BJ (cell line): ENCODE measurements at regions of chr6 and their contacts with region 1.

Region 1: DNA sequence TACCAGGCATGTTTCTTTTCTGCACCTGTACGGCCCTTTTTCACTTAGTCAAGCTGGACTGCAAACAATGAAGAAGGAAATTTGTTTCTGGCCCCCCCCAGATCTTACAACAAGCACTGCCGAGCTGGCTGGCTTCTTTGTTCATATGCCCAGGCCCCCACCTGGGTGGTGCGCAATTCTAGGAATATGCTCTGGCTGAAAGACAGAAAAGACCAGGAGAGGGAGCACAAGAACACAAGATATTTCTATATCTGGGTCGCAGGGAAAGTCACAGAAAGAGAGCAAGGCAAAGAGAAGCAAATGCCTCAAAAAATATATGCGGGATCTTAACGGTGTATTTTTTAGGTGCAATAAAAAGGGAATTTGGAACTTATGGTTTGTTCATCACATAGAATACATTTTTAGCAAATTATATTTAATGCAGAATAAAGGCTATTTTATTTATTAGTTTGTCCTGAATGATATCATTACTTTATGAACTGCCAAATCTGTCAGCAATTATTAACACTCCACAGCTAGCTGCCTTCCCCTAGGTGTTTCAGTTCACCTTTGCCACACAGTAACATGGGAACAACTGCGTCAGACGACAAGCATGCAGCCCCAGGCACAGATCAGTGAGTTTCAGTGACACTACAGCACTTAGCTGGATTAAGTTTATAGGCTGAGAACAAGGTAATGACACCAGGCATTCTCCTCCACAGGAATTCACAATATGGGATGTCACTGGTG is 76.5 kb downstream of the GJA10 start:
- DNase-seq: no peak
- H3K4me3 ChIP-seq: no peak overlapping the region
- H3K27me3 ChIP-seq: 0 out of 2 replicates have a peak, but pooled peaks cover 1% of the 10 kb centered on the region
- CTCF ChIP-seq: peak; percentile 71

Region 2: GRCh38 chr6:89412071-89413005 is 558.4 kb before region 1 on chr6 and contains the start of gene RRAGD:
- CTCF ChIA-PET with region 1: no interaction called
- POLR2A ChIA-PET with region 1: no interaction called
- DNase-seq: no peak
- H3K4me3 ChIP-seq: peak within 1 kb of the TSS; percentile 32
- H3K27me3 ChIP-seq: peaks cover 26% of the 10 kb centered on the region
- CTCF ChIP-seq: no peak
- polyA plus RNA-seq, gene RRAGD: not detected in 2 replicates

Region 3: DNA sequence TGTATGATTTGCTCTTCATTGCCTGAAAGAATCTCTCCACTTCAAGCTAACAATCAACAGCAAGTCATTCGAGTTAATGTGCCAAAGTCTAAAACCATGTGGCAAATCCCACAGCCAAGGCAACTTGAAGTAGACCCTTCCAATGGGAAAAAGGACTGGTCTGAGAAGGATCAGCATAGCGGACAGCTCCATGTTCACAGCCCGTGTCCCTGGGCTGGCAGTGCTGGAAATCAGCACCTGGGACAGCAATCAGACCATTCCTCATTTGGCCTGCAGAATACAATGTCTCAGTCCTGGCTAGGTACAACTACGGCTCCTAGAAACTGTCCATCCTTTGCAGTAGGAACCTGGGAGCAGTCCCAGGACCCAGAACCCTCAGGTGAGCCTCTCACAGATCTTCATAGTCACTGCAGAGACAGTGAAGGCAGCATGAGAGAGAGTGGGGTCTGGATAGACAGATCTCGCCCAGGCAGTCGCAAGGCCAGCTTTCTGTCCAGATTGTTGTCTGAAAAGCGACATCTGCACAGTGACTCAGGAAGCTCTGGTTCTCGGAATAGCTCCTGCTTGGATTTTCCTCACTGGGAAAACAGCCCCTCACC is 75.4 kb before region 1 on chr6:
- CTCF ChIA-PET with region 1: no interaction called
- POLR2A ChIA-PET with region 1: no interaction called
- DNase-seq: no peak
- H3K4me3 ChIP-seq: no peak overlapping the region
- H3K27me3 ChIP-seq: no peaks in the 10 kb centered on the region; the same call in 1 of the 2 replicates
- CTCF ChIP-seq: no peak

Region 4: GRCh38 chr6:89940225-89941027 is 30.3 kb before region 1 on chr6:
- CTCF ChIA-PET with region 1: interaction called, 17 read pairs
- POLR2A ChIA-PET with region 1: no interaction called
- DNase-seq: no peak
- H3K4me3 ChIP-seq: no peak overlapping the region
- H3K27me3 ChIP-seq: peaks cover 2% of the 10 kb centered on the region; the same call in 1 of the 2 replicates
- CTCF ChIP-seq: peak; percentile 82

Region 5: GRCh38 chr6:89952686-89953085 is 18.1 kb before region 1 on chr6:
- CTCF ChIA-PET with region 1: interaction called, 19 read pairs
- POLR2A ChIA-PET with region 1: no interaction called
- DNase-seq: peak; percentile 65
- H3K4me3 ChIP-seq: no peak overlapping the region
- H3K27me3 ChIP-seq: no peaks in the 10 kb centered on the region
- CTCF ChIP-seq: no peak